Mammary epithelial cell (primary cell): ENCODE measurements at regions of chr12 and their contacts with region 1.

Region 1: DNA sequence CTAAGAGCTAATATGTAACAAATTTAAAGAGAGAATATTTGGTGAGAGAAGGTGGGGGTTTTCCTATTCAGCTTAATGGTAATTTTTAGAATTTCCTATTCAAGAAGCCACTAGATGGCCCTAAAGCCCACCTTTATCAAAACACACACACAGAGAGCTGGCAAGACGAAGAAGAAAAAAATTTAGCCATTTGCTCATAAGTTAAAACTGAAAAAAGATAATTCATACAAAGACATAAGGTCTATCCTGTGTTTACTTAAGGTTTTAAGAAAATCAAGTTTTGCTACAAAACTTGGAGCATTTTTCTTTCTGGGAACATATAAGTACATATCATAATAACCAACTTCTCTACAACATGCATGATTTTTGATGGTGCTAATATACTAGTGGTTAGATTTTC is 46.8 kb upstream of the PCED1B start:
- DNase-seq: peak; percentile 55
- H3K4me3 ChIP-seq: no peak overlapping the region
- H3K27ac ChIP-seq: no peak overlapping the region
- H3K4me1 ChIP-seq: peaks cover 24% of the 10 kb centered on the region
- H3K27me3 ChIP-seq: no peaks in the 10 kb centered on the region
- CTCF ChIP-seq: peak; percentile 44 to 56

Region 2: GRCh38 chr12:46963977-46964971 is 68.4 kb before region 1 on chr12:
- CTCF ChIA-PET with region 1: no interaction called
- dilution Hi-C with region 1: no loop called
- in situ Hi-C with region 1: no loop called
- intact Hi-C with region 1: no loop called
- DNase-seq: peak; percentile 81
- H3K4me3 ChIP-seq: peak overlapping the region in 1 of 3 experiments; percentile 13
- H3K27ac ChIP-seq: peak overlapping the region; percentile 90
- H3K4me1 ChIP-seq: peaks cover 31% of the 10 kb centered on the region
- H3K27me3 ChIP-seq: no peaks in the 10 kb centered on the region
- CTCF ChIP-seq: no peak

Region 3: GRCh38 chr12:47004634-47005033 is 28.0 kb before region 1 on chr12:
- CTCF ChIA-PET with region 1: no interaction called
- dilution Hi-C with region 1: no loop called
- in situ Hi-C with region 1: no loop called
- intact Hi-C with region 1: no loop called
- DNase-seq: no peak
- H3K4me3 ChIP-seq: no peak overlapping the region
- H3K27ac ChIP-seq: no peak overlapping the region
- H3K4me1 ChIP-seq: no peaks in the 10 kb centered on the region
- H3K27me3 ChIP-seq: no peaks in the 10 kb centered on the region
- CTCF ChIP-seq: no peak

Region 4: DNA sequence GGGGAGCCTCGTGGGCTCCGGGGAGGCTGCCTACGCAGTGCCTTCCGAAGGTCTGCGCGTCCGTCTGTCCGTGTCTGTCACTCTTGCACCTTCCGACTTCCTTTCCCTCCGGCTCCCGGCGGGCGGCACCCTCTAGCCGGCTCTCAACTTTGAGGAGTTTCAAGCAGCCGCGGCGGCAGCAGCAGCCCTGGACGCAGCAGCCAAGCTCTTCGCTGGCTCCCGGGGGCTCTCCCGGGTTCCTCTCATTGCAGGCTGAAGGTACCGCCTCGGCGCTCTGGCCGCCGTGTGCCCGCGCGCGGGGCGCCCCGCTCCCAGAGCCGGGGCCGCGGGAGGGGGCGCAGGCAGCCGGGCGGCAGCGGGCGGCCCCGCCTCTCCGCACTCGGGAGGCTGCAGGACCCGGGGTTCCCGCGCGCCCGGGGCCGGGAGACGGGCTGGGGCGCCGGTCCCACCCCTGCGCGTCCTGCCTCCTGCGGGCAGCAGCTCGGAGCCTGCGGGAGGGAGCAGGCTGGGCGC is 46.9 kb after region 1 on chr12 and contains the starts of genes AMIGO2 and PCED1B:
- CTCF ChIA-PET with region 1: no interaction called
- dilution Hi-C with region 1: no loop called
- in situ Hi-C with region 1: loop called in 1 of 2 experiments (anchors 5 kb)
- intact Hi-C with region 1: loop called (anchors 1 kb)
- DNase-seq: peak; percentile 67
- H3K4me3 ChIP-seq: peak within 1 kb of the TSS; percentile 72 to 85 (median 78)
- H3K27ac ChIP-seq: peak within 1 kb of the TSS; percentile 94
- H3K4me1 ChIP-seq: peaks cover 46% of the 10 kb centered on the region
- H3K27me3 ChIP-seq: no peaks in the 10 kb centered on the region
- CTCF ChIP-seq: peak; percentile 19 to 69
- total RNA-seq, gene AMIGO2: 96.1 to 241 TPM
- total RNA-seq, gene PCED1B: 2.3 to 10.3 TPM

Region 5: GRCh38 chr12:47307680-47308399 is 275.2 kb after region 1 on chr12:
- CTCF ChIA-PET with region 1: interaction called, 3 read pairs
- dilution Hi-C with region 1: no loop called
- in situ Hi-C with region 1: no loop called
- intact Hi-C with region 1: loop called (anchors 1 kb)
- DNase-seq: peak; percentile 65
- H3K4me3 ChIP-seq: no peak overlapping the region
- H3K27ac ChIP-seq: no peak overlapping the region
- H3K4me1 ChIP-seq: peaks cover 17% of the 10 kb centered on the region
- H3K27me3 ChIP-seq: no peaks in the 10 kb centered on the region
- CTCF ChIP-seq: peak; percentile 67 to 76

Region 6: GRCh38 chr12:47504775-47505446 is 472.3 kb after region 1 on chr12:
- CTCF ChIA-PET with region 1: no interaction called
- dilution Hi-C with region 1: no loop called
- in situ Hi-C with region 1: no loop called
- intact Hi-C with region 1: loop called (anchors 10 kb)
- DNase-seq: peak; percentile 65
- H3K4me3 ChIP-seq: no peak overlapping the region
- H3K27ac ChIP-seq: no peak overlapping the region
- H3K4me1 ChIP-seq: peaks cover 30% of the 10 kb centered on the region
- H3K27me3 ChIP-seq: no peaks in the 10 kb centered on the region
- CTCF ChIP-seq: no peak

Region 7: GRCh38 chr12:47636908-47637780 is 604.5 kb after region 1 on chr12:
- CTCF ChIA-PET with region 1: interaction called, 9 read pairs
- dilution Hi-C with region 1: no loop called
- in situ Hi-C with region 1: no loop called
- intact Hi-C with region 1: loop called (anchors 2 kb)
- DNase-seq: peak; percentile 73
- H3K4me3 ChIP-seq: no peak overlapping the region
- H3K27ac ChIP-seq: no peak overlapping the region
- H3K4me1 ChIP-seq: no peaks in the 10 kb centered on the region
- H3K27me3 ChIP-seq: no peaks in the 10 kb centered on the region
- CTCF ChIP-seq: peak; percentile 56 to 77

Region 8: DNA sequence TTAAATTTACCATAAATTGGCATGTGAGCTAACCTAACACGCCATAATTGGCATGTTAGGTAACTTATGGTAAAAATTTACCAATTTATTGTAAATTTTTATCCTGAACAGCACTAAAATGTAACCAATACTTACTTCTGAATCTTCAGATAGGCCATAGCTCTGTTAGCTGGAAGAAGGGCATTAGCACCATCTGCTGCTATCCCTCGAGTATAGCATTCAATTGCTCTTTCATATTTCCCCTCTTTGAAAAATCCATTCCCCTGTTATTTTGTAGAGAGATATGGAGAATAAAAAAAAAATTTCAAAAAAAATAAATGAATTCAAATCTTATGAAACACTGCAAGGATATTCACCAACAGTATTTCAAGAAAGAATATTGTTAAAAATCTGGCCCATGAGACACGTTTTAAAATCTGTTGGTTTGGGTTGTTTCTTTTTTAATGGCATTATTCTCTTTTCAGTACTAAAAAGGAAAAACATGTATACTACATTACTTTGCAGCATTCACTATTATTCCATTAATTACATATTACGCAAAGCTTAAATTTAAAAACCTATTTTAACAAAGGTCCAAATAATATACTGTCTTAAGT is 654.1 kb after region 1 on chr12:
- CTCF ChIA-PET with region 1: interaction called, 6 read pairs
- dilution Hi-C with region 1: no loop called
- in situ Hi-C with region 1: loop called in 1 of 2 experiments (anchors 25 kb)
- intact Hi-C with region 1: loop called (anchors 1 kb)
- DNase-seq: peak; percentile 5
- H3K4me3 ChIP-seq: no peak overlapping the region
- H3K27ac ChIP-seq: no peak overlapping the region
- H3K4me1 ChIP-seq: no peaks in the 10 kb centered on the region
- H3K27me3 ChIP-seq: no peaks in the 10 kb centered on the region
- CTCF ChIP-seq: peak; percentile 54 to 79